BJ (cell line): ENCODE measurements at regions of chr4 and their contacts with region 1.

Region 1: DNA sequence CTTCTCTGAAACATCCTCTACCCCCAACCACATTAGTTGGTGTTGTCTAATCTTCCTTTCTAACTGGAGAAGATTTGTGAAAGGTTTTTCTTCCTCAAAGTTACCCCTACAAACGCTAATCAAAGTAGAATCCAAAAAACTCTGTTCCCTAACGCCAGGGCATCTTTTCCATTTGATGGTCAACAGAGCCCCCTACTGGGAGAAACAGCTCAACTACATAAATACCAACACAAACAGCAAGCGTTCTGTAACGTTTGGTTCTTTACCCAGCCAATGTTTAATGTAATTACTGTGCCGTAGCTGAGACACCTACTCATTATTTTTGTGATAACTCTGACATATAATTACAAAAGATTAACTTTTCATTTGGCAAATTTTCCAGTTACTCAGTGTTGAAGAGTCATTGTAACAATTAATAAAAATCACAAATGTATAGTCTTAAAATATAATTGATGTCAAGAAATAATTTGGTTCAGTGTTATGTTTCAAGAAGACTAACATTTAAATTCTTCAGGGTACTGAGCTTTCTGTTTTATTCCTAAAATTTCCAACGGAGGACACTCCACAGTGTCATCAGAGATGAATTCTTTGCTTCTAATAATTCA is 94.9 kb upstream of the TBC1D9 start:
- DNase-seq: no peak
- H3K4me3 ChIP-seq: no peak overlapping the region
- H3K27me3 ChIP-seq: peaks cover 1% of the 10 kb centered on the region; the same call in 1 of the 2 replicates
- CTCF ChIP-seq: peak; percentile 72

Region 2: DNA sequence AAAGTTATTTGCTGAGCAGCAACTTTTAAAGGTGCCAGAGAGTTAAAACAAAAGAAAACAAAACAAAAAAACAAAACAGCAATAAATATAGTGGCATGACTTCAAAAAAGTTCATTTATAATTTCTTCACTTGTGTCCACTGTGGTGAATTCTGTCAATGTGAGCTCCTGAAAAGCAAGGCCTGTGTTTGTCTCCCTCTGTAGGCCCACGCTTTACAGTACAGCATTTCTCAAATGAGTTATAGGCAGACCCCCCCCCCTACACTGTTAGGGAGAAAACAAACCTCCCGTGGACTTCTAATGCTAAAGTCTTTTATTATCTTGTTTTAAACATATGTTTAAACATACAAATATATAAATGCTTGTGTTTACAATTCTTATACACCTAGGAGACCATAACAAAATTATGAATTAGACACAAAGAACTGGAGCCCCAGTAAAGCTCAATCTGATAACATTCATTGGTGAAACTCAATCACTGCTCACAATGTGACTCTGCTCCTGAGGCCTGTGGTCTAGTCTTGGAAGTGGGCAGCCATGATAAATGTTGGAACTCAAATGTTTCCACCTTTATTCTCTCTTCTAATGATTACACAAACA is 524.6 kb before region 1 on chr4:
- CTCF ChIA-PET with region 1: interaction called, 24 read pairs
- POLR2A ChIA-PET with region 1: no interaction called
- DNase-seq: no peak
- H3K4me3 ChIP-seq: no peak overlapping the region
- H3K27me3 ChIP-seq: no peaks in the 10 kb centered on the region; the same call in 1 of the 2 replicates
- CTCF ChIP-seq: peak; percentile 83

Region 3: DNA sequence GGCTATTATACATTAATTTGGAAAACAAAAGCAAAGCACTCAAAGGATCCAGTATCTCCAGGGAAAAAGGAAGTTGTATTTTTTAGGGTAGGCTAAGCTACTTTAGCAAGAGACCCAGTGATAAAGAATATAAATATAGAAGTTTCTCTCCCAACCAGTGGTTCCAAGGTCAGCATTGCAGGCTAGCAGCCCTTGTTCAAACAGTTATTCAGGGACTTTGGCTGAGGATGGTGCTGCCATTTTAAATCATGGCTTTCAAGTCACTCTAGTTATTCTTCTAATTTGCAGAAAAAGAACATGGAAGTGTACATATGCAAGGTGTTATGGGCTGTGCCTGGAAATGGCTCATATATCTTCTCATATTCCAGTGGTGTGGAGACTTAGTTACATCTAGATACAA is 468.4 kb before region 1 on chr4:
- CTCF ChIA-PET with region 1: no interaction called
- POLR2A ChIA-PET with region 1: no interaction called
- DNase-seq: no peak
- H3K4me3 ChIP-seq: no peak overlapping the region
- H3K27me3 ChIP-seq: no peaks in the 10 kb centered on the region
- CTCF ChIP-seq: no peak

Region 4: GRCh38 chr4:140595065-140595464 is 256.1 kb before region 1 on chr4:
- CTCF ChIA-PET with region 1: interaction called, 13 read pairs
- POLR2A ChIA-PET with region 1: no interaction called
- DNase-seq: no peak
- H3K4me3 ChIP-seq: no peak overlapping the region
- H3K27me3 ChIP-seq: no peaks in the 10 kb centered on the region; the same call in 1 of the 2 replicates
- CTCF ChIP-seq: peak; percentile 61

Region 5: GRCh38 chr4:140609548-140610425 is 241.3 kb before region 1 on chr4:
- CTCF ChIA-PET with region 1: interaction called, 14 read pairs
- POLR2A ChIA-PET with region 1: no interaction called
- DNase-seq: no peak
- H3K4me3 ChIP-seq: no peak overlapping the region
- H3K27me3 ChIP-seq: no peaks in the 10 kb centered on the region; the same call in 1 of the 2 replicates
- CTCF ChIP-seq: peak; percentile 56

Region 6: DNA sequence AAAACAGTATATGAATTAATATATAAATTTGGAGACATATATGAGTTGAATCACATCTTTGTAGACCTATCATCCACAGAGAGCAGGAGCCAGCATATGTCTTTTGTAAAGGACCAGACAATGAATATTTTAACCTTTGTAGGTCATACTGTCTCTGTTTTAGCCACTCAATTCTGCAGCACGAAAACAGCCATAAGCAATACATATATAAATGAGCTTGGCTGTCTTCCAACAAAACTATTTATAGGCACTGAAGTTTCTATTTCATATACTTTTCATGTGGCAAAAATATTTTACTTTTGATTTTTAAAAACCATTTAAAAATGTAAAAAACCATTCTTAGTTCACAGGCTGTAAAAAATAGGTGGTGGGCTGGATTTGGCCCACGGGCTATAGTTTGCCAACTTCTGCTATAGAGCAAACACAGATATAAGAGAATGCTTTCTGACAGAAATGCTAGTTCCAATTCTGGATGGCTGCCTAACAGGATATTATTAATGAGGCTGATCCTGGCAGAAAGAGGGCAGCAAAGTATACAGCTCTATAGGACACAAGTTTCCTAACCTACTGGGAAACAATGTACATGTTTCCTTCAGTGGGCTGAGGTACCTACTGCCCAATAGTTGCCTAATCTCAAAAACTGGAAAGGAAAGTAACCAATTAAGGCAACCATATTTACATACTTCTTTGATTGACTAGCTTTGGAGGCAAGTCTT is 224.3 kb before region 1 on chr4:
- CTCF ChIA-PET with region 1: interaction called, 11 read pairs
- POLR2A ChIA-PET with region 1: no interaction called
- DNase-seq: no peak
- H3K4me3 ChIP-seq: no peak overlapping the region
- H3K27me3 ChIP-seq: no peaks in the 10 kb centered on the region
- CTCF ChIP-seq: peak; percentile 31

Region 7: GRCh38 chr4:140903522-140904475 is 52.7 kb after region 1 on chr4:
- CTCF ChIA-PET with region 1: no interaction called
- POLR2A ChIA-PET with region 1: no interaction called
- DNase-seq: no peak
- H3K4me3 ChIP-seq: no peak overlapping the region
- H3K27me3 ChIP-seq: no peaks in the 10 kb centered on the region
- CTCF ChIP-seq: no peak

Region 8: DNA sequence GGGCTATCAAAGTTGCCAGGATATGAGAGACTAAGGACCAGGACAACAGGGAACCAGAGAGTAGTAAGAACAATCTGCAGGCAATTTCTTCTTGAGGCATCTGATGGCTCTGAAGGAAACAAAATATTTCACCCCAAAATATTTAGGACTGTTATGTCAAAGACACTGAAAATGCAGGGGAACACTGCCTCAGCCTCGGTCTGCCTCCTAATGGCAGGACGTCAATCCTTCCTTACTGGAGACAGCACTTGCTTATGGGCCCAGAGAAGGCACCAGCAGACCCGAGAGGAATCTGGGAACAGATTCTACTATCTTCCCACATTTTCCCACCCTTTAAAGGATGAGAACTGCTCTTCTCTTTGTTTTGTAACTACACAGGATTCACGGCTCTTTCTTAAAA is 258.8 kb after region 1 on chr4:
- CTCF ChIA-PET with region 1: no interaction called
- POLR2A ChIA-PET with region 1: no interaction called
- DNase-seq: no peak
- H3K4me3 ChIP-seq: no peak overlapping the region
- H3K27me3 ChIP-seq: no peaks in the 10 kb centered on the region
- CTCF ChIP-seq: no peak